Posterior vena cava (tissue), 2 donors: ENCODE measurements at regions of chr11 and their contacts with region 1.

Region 1: GRCh38 chr11:70078796-70079616 is 889 bp downstream of the ANO1 start:
- DNase-seq: peak; percentile 61

Region 2: GRCh38 chr11:69985641-69986439 is 93.2 kb before region 1 on chr11:
- intact Hi-C with region 1: no loop called
- DNase-seq: no peak

Region 3: GRCh38 chr11:70031631-70032469 is 47.2 kb before region 1 on chr11:
- intact Hi-C with region 1: loop called in 1 of 2 experiments (anchors 1 kb)
- DNase-seq: peak; percentile 62